ENCODE measurements at regions of chr7 and their contacts with region 1.

Region 1: GRCh38 chr7:138663725-138664710 is 37.1 kb downstream of the SVOPL start:
- DNase-seq: peak; percentile 28
- H3K4me3 Mint-ChIP-seq: peak overlapping the region; percentile 76
- H3K27ac Mint-ChIP-seq: no peak overlapping the region
- H3K4me1 Mint-ChIP-seq: peaks cover 15% of the 10 kb centered on the region
- H3K27me3 Mint-ChIP-seq: peaks cover 29% of the 10 kb centered on the region

Region 2: GRCh38 chr7:138608275-138608674 is 55.7 kb before region 1 on chr7:
- CTCF ChIA-PET with region 1: interaction called, 3 read pairs
- intact Hi-C with region 1: loop called (anchors 5 kb)
- DNase-seq: peak; percentile 57
- H3K4me3 Mint-ChIP-seq: no peak overlapping the region
- H3K27ac Mint-ChIP-seq: no peak overlapping the region
- H3K4me1 Mint-ChIP-seq: peaks cover 16% of the 10 kb centered on the region
- H3K27me3 Mint-ChIP-seq: no peaks in the 10 kb centered on the region

Region 3: GRCh38 chr7:138679793-138680192 is 15.8 kb after region 1 on chr7:
- CTCF ChIA-PET with region 1: no interaction called
- intact Hi-C with region 1: no loop called
- DNase-seq: no peak
- H3K4me3 Mint-ChIP-seq: no peak overlapping the region
- H3K27ac Mint-ChIP-seq: no peak overlapping the region
- H3K4me1 Mint-ChIP-seq: peaks cover 4% of the 10 kb centered on the region
- H3K27me3 Mint-ChIP-seq: no peaks in the 10 kb centered on the region

Measured in activated naive CD4-positive, alpha-beta T cell treated with anti-CD3 and anti-CD28 coated beads for 36 hours (primary cell).